ENCODE measurements at regions of chr9 and their contacts with region 1.

Region 1: GRCh38 chr9:93082841-93083411 is 13.1 kb upstream of the CARD19 start:
- DNase-seq: peak in 8 of 42 donors; percentile 2 to 28 (median 10)

Region 2: GRCh38 chr9:92887880-92888338 is 195.0 kb before region 1 on chr9:
- intact Hi-C with region 1: loop called (anchors 10 kb)
- DNase-seq: no peak

Region 3: GRCh38 chr9:93126825-93127368 is 44.0 kb after region 1 on chr9:
- intact Hi-C with region 1: no loop called
- DNase-seq: peak in 10 of 42 donors; percentile 12 to 60 (median 34)